Activated CD4-positive, alpha-beta memory T cell treated with anti-CD3 and anti-CD28 coated beads, Interleukin-2, amount 10 ng/mL, durations not matched to agents 7 days and 5 days (primary cell): ENCODE measurements at regions of chr12 and their contacts with region 1.

Region 1: GRCh38 chr12:6944381-6945186 is 762 bp downstream of the C12orf57 start:
- DNase-seq: peak; percentile 91
- H3K4me3 Mint-ChIP-seq: peak overlapping the region; percentile 86
- H3K27ac Mint-ChIP-seq: peak overlapping the region; percentile 93
- H3K4me1 Mint-ChIP-seq: peaks cover 59% of the 10 kb centered on the region
- H3K27me3 Mint-ChIP-seq: no peaks in the 10 kb centered on the region

Region 2: DNA sequence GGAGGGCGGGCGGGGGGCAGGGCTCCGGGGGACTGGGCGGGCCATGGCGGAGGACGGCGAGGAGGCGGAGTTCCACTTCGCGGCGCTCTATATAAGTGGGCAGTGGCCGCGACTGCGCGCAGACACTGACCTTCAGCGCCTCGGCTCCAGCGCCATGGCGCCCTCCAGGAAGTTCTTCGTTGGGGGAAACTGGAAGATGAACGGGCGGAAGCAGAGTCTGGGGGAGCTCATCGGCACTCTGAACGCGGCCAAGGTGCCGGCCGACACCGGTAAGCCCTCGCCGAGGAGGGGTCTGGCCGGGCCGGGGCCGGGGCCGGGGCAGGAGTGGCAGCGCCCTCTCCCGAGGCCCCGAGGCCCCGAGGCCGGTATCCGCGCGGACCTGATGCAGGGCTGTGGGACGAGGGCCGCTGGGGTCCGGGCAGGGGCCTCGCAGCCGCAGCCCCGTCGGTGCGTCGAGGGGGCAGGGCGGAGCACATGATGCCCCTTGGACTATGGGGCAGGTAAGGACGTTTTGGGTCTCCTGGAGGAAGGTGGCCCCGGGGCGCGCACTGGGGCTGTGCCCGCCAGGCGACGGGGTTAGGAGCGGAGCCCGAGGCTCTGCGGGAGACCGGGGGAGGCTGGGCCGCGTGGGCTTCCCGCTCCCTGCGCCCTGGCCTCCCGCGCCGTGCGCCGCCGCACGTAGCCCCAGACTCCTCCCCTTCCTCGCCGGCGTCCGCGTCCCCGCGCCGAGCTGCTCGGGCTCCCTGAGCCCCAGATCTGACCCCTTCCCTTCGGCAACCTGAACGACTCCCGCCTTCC is 77.0 kb before region 1 on chr12 and contains the start of gene TPI1:
- CTCF ChIA-PET with region 1: interaction called, 28 read pairs
- POLR2A ChIA-PET with region 1: interaction called, 72 read pairs
- DNase-seq: peak; percentile 83
- H3K4me3 Mint-ChIP-seq: peak within 1 kb of the TSS; percentile 97
- H3K27ac Mint-ChIP-seq: peak within 1 kb of the TSS; percentile 95
- H3K4me1 Mint-ChIP-seq: peaks cover 54% of the 10 kb centered on the region
- H3K27me3 Mint-ChIP-seq: no peaks in the 10 kb centered on the region
- total RNA-seq, gene TPI1: 1,228 to 1,253 TPM

Region 3: GRCh38 chr12:6914246-6914946 is 30.2 kb before region 1 on chr12 and contains the start of gene ENO2:
- CTCF ChIA-PET with region 1: no interaction called
- POLR2A ChIA-PET with region 1: interaction called, 33 read pairs
- DNase-seq: peak; percentile 86
- H3K4me3 Mint-ChIP-seq: peak within 1 kb of the TSS; percentile 90
- H3K27ac Mint-ChIP-seq: peak within 1 kb of the TSS; percentile 80
- H3K4me1 Mint-ChIP-seq: peaks cover 50% of the 10 kb centered on the region
- H3K27me3 Mint-ChIP-seq: no peaks in the 10 kb centered on the region
- total RNA-seq, gene ENO2: 206 to 207 TPM

Region 4: GRCh38 chr12:6965026-6965661 is 20.6 kb after region 1 on chr12:
- CTCF ChIA-PET with region 1: interaction called, 465 read pairs
- POLR2A ChIA-PET with region 1: interaction called, 1,188 read pairs
- DNase-seq: peak; percentile 89
- H3K4me3 Mint-ChIP-seq: no peak overlapping the region
- H3K27ac Mint-ChIP-seq: peak overlapping the region; percentile 83
- H3K4me1 Mint-ChIP-seq: peaks cover 79% of the 10 kb centered on the region
- H3K27me3 Mint-ChIP-seq: no peaks in the 10 kb centered on the region

Region 5: GRCh38 chr12:7018350-7019042 is 73.9 kb after region 1 on chr12 and contains the start of gene LPCAT3:
- CTCF ChIA-PET with region 1: interaction called, 5 read pairs
- POLR2A ChIA-PET with region 1: interaction called, 60 read pairs
- DNase-seq: peak; percentile 97
- H3K4me3 Mint-ChIP-seq: peak within 1 kb of the TSS; percentile 84
- H3K27ac Mint-ChIP-seq: peak within 1 kb of the TSS; percentile 81
- H3K4me1 Mint-ChIP-seq: peaks cover 30% of the 10 kb centered on the region
- H3K27me3 Mint-ChIP-seq: no peaks in the 10 kb centered on the region
- total RNA-seq, gene LPCAT3: 34.6 to 37.0 TPM

Region 6: DNA sequence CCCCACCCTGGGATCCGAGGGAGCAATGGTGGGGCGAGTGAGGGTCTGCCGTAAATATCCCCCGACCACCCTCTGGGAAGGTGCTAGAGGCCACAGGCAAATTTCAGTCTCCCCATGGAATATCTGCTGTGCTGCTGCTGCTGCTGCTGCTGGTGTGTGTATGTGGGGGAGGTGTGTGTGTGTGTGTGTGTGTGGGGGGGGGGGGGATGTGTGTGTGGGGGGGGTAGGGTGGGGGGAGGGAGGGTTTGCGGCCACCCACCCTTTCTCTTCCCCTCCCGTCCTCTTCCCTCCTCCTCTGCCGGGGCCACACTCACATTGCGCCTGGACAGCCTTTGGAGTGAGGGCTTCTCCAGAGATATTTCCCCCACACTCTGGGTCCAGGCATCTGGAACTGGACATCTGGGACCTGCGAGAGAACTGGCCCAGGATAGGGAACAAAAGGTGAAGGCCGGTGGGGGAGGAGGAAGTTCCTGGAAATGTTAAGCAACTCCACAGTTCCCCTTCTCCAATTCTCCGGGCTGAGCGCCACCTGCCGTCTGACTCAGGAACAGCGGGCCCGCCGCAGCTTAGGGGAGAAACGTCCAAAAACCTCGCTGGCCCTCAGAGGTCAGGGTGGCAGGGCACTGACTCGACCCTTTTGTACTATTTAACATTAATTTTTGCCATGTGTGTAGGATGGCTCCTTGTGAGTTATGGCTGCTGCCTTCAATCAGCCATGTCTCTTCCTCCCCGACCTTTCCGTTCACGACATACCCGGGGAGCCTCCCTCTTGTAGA is 164.4 kb after region 1 on chr12 and contains the start of gene C1RL:
- CTCF ChIA-PET with region 1: interaction called, 41 read pairs
- POLR2A ChIA-PET with region 1: interaction called, 168 read pairs
- DNase-seq: peak; percentile 83
- H3K4me3 Mint-ChIP-seq: peak within 1 kb of the TSS; percentile 91
- H3K27ac Mint-ChIP-seq: peak within 1 kb of the TSS; percentile 94
- H3K4me1 Mint-ChIP-seq: peaks cover 61% of the 10 kb centered on the region
- H3K27me3 Mint-ChIP-seq: no peaks in the 10 kb centered on the region
- total RNA-seq, gene C1RL: 26.5 to 28.8 TPM